T-cell (primary cell): ENCODE measurements at regions of chr20 and their contacts with region 1.

Region 1: GRCh38 chr20:51934301-51935002 is 132.1 kb upstream of the SALL4 start:
- DNase-seq: no peak
- ATAC-seq: no peak
- H3K4me3 ChIP-seq: no peak overlapping the region
- H3K4me3 Mint-ChIP-seq: no peak overlapping the region
- H3K27ac ChIP-seq: no peak overlapping the region
- H3K27ac Mint-ChIP-seq: no peak overlapping the region
- H3K4me1 ChIP-seq: no peaks in the 10 kb centered on the region
- H3K4me1 Mint-ChIP-seq: no peaks in the 10 kb centered on the region
- H3K27me3 ChIP-seq: no peaks in the 10 kb centered on the region
- H3K27me3 Mint-ChIP-seq: peaks cover 2 to 4% of the 10 kb centered on the region in 2 donors

Region 2: GRCh38 chr20:51639206-51639832 is 295.1 kb before region 1 on chr20:
- CTCF ChIA-PET with region 1: interaction called in 1 of 2 experiments, 10 read pairs
- POLR2A ChIA-PET with region 1: no interaction called
- DNase-seq: peak in 30 of 35 experiments; percentile 8 to 68 (median 36)
- ATAC-seq: peak in 2 of 4 experiments; percentile 41 to 42
- H3K4me3 ChIP-seq: no peak overlapping the region
- H3K4me3 Mint-ChIP-seq: no peak overlapping the region
- H3K27ac ChIP-seq: no peak overlapping the region
- H3K27ac Mint-ChIP-seq: no peak overlapping the region
- H3K4me1 ChIP-seq: peaks cover 0 to 5% of the 10 kb centered on the region in 2 experiments
- H3K4me1 Mint-ChIP-seq: peaks cover 0 to 3% (median 0%) of the 10 kb centered on the region in 3 donors
- H3K27me3 ChIP-seq: peaks cover 0 to 10% of the 10 kb centered on the region in 2 experiments
- H3K27me3 Mint-ChIP-seq: peaks cover 9 to 11% of the 10 kb centered on the region in 2 donors